ENCODE measurements at regions of chr15 and their contacts with region 1.

Region 1: GRCh38 chr15:41051139-41051538 is 64.9 kb downstream of the INO80 start:
- DNase-seq: no peak
- ATAC-seq: no peak
- H3K4me3 ChIP-seq: no peak overlapping the region
- H3K27ac ChIP-seq: no peak overlapping the region
- H3K4me1 ChIP-seq: no peaks in the 10 kb centered on the region
- H3K27me3 ChIP-seq: no peaks in the 10 kb centered on the region
- CTCF ChIP-seq: no peak
- POLR2A ChIP-seq: no peak
- RAD21 ChIP-seq: no peak

Region 2: GRCh38 chr15:40857601-40858341 is 193.4 kb before region 1 on chr15:
- CTCF ChIA-PET with region 1: no interaction called
- POLR2A ChIA-PET with region 1: no interaction called
- dilution Hi-C with region 1: no loop called
- in situ Hi-C with region 1: no loop called
- intact Hi-C with region 1: no loop called
- DNase-seq: peak; percentile 48
- ATAC-seq: peak; percentile 99
- H3K4me3 ChIP-seq: no peak overlapping the region
- H3K27ac ChIP-seq: no peak overlapping the region
- H3K4me1 ChIP-seq: no peaks in the 10 kb centered on the region
- H3K27me3 ChIP-seq: peaks cover 7% of the 10 kb centered on the region
- CTCF ChIP-seq: peak; percentile 91
- POLR2A ChIP-seq: no peak
- RAD21 ChIP-seq: peak; percentile 77

Region 3: DNA sequence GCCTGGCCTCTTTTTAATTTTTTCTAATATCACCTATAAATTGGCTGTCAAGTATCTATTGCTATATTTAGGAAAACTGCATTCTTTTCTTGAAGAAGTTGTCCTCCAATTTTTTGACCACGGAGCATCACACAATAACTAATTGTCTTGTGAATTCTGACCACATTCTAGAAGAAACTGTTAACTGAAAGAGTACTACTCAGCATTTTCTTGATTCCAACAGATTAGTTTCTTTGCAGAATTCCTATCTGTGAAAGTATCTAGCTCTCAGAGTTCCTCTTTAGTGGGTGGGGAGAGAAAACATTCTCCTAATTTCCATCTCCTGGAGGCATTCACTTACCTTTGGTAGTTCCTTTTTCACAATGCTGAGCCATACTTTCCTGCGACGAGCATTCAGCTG is 33.9 kb after region 1 on chr15:
- CTCF ChIA-PET with region 1: no interaction called
- POLR2A ChIA-PET with region 1: no interaction called
- dilution Hi-C with region 1: no loop called
- in situ Hi-C with region 1: no loop called
- intact Hi-C with region 1: loop called (anchors 5 kb)
- DNase-seq: no peak
- ATAC-seq: no peak
- H3K4me3 ChIP-seq: no peak overlapping the region
- H3K27ac ChIP-seq: no peak overlapping the region
- H3K4me1 ChIP-seq: peaks cover 2% of the 10 kb centered on the region; the same call in 1 of the 2 replicates
- H3K27me3 ChIP-seq: no peaks in the 10 kb centered on the region
- CTCF ChIP-seq: no peak
- POLR2A ChIP-seq: no peak
- RAD21 ChIP-seq: no peak

Measured in IMR-90 (cell line).